K562 (cell line): ENCODE measurements at regions of chr7 and their contacts with region 1.

Region 1: DNA sequence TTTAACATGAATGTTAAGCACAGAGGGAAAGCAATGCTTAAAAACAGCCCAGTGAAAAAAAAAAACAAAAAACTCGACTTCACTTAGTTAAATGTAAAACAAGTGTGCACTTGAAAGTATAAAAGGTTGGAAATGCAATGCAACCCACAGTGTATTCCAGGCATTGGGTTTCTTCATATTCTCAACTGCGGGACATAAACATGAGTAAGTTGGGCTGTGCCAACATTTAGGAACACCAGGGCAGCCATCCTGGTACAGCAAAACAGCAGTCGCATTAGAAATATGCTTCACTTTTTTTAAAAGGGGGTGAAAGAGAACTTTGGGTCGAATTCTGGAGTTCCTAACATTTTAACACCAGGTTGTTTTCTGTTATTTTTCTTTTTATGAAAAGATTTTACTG is 937 bp downstream of the STEAP1 start:
- DNase-seq: no peak
- ATAC-seq: no peak
- H3K4me3 ChIP-seq: no peak overlapping the region
- H3K27ac ChIP-seq: no peak overlapping the region
- H3K4me1 ChIP-seq: peaks cover 0 to 8% of the 10 kb centered on the region in 2 experiments; a peak in 2 of 5 replicates
- H3K27me3 ChIP-seq: no peaks in the 10 kb centered on the region
- CTCF ChIP-seq: no peak
- EP300 ChIP-seq: no peak
- POLR2A ChIP-seq: no peak
- RAD21 ChIP-seq: no peak

Region 2: DNA sequence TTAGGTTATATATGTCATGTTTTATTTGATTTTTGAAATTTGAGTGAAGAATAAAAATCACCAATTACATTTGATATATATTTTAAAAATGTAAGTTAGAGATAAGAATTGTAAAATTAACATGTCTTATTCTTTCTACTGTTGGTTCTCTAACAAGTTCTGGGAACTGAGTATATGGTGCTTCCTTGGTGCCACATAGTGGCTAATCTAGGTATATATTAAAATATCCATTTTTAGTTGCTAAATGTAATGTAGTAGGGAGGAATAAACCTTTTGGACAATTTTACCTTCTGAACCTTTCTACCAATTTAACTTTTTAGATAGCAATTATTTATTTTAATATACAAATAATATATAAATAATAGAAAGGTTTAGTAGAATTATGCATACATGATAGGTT is 107.2 kb after region 1 on chr7:
- CTCF ChIA-PET with region 1: interaction called, 11 read pairs
- POLR2A ChIA-PET with region 1: no interaction called
- in situ Hi-C with region 1: no loop called
- intact Hi-C with region 1: loop called (anchors 1 kb)
- DNase-seq: peak; percentile 19 to 36 (median 30)
- ATAC-seq: peak; percentile 84
- H3K4me3 ChIP-seq: no peak overlapping the region
- H3K27ac ChIP-seq: no peak overlapping the region
- H3K4me1 ChIP-seq: no peaks in the 10 kb centered on the region
- H3K27me3 ChIP-seq: no peaks in the 10 kb centered on the region; a peak in 1 of 5 replicates
- CTCF ChIP-seq: peak in 2 of 3 experiments; percentile 35 to 69; a peak in 3 of 6 replicates
- EP300 ChIP-seq: no peak
- POLR2A ChIP-seq: no peak
- RAD21 ChIP-seq: peak; percentile 58 to 65

Region 3: GRCh38 chr7:90298145-90299038 is 143.2 kb after region 1 on chr7:
- CTCF ChIA-PET with region 1: interaction called, 4 read pairs
- POLR2A ChIA-PET with region 1: no interaction called
- in situ Hi-C with region 1: no loop called
- intact Hi-C with region 1: loop called (anchors 1 kb)
- DNase-seq: peak in 3 of 4 experiments; percentile 13 to 52 (median 50)
- ATAC-seq: peak; percentile 99
- H3K4me3 ChIP-seq: no peak overlapping the region
- H3K27ac ChIP-seq: no peak overlapping the region
- H3K4me1 ChIP-seq: no peaks in the 10 kb centered on the region
- H3K27me3 ChIP-seq: no peaks in the 10 kb centered on the region
- CTCF ChIP-seq: peak; percentile 56 to 78 (median 72)
- EP300 ChIP-seq: no peak
- POLR2A ChIP-seq: no peak
- RAD21 ChIP-seq: peak; percentile 50 to 69; a peak in 3 of 4 replicates

Region 4: GRCh38 chr7:90764848-90765570 is 609.8 kb after region 1 on chr7:
- CTCF ChIA-PET with region 1: no interaction called
- POLR2A ChIA-PET with region 1: no interaction called
- in situ Hi-C with region 1: no loop called
- intact Hi-C with region 1: no loop called
- DNase-seq: no peak
- ATAC-seq: no peak
- H3K4me3 ChIP-seq: no peak overlapping the region
- H3K27ac ChIP-seq: no peak overlapping the region
- H3K4me1 ChIP-seq: no peaks in the 10 kb centered on the region
- H3K27me3 ChIP-seq: no peaks in the 10 kb centered on the region
- CTCF ChIP-seq: no peak
- EP300 ChIP-seq: no peak
- POLR2A ChIP-seq: no peak
- RAD21 ChIP-seq: no peak